ENCODE measurements at regions of chr5 and their contacts with region 1.

Region 1: DNA sequence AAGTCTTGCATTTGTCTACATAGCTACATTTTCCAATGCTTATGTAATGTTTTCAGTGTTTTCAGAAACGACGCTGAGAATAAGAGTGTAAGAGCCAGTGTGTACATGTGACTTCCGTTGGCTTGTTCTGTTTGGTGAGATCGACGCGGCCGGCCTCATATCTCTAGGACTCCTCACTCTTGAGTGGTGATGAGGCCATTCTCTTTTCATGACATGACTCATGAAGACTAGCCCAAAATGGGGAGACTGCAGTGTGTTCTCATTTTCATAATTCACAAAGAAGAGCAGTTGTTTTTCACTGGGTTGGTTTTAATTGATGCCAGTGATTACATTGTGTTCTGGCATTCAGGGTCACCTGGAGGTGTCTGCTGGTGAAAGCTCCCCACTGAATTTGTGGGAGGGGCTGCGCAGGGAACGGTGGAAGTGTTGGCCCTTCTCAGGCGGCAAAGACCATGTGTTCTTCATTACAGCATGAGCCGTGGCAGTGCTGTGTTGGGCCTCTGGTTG is 131.5 kb upstream of the OTULINL start:
- DNase-seq: no peak
- ATAC-seq: no peak

Region 2: GRCh38 chr5:14405267-14405666 is 44.8 kb before region 1 on chr5:
- intact Hi-C with region 1: loop called in 1 of 2 experiments (anchors 10 kb)
- DNase-seq: peak; percentile 23 to 37
- ATAC-seq: peak; percentile 67